Esophagus muscularis mucosa (tissue), 4 donors: ENCODE measurements at regions of chr9 and their contacts with region 1.

Region 1: GRCh38 chr9:94213511-94214124 is 45.5 kb upstream of the ZNF169 start:
- DNase-seq: peak; percentile 95
- H3K4me3 ChIP-seq: no peak overlapping the region
- H3K27ac ChIP-seq: no peak overlapping the region
- H3K4me1 ChIP-seq: peaks cover 0 to 7% (median 6%) of the 10 kb centered on the region in 4 donors
- H3K27me3 ChIP-seq: no peaks in the 10 kb centered on the region
- CTCF ChIP-seq: peak; percentile 82 to 87 (median 85)
- EP300 ChIP-seq: no peak
- POLR2A ChIP-seq: no peak

Region 2: DNA sequence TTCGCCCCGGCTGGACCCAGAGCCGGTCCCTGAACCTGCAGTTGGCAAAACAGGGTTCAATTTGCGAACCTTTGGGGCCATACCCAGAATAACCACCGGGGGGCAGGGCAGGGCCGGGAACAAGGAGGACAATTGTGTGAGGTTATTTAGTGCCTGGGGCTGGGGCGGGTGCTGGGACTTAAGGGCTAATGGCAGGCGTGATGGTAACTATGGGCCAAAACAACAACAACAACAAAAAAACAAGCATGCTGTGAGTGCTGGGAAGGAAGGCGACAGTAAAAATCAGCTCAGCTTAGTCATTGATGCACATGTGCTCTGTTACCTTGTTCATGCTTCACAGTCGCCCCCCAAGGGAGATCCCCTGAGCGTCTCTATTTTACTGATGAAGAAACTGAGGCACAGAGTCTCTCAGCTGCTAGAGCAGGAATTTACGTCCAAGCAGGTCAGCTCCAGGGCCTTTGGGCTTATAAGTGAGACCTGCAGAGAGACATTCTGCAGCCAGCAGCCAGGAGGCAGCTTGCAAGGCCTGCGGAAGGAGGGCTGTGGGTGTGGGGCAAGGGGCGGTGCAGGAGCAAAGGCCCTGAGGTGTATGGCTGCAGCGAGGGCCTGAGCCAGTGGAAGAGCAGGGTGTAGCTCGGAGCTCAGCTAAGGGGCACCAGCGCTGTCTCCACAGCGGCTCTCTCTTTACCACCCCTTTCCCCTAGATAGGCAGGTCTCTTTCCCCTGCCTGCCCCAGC is 531.2 kb before region 1 on chr9:
- intact Hi-C with region 1: loop called (anchors 5 kb)
- DNase-seq: peak; percentile 94
- H3K4me3 ChIP-seq: no peak overlapping the region
- H3K27ac ChIP-seq: no peak overlapping the region
- H3K4me1 ChIP-seq: peaks cover 0 to 8% (median 5%) of the 10 kb centered on the region in 4 donors
- H3K27me3 ChIP-seq: peaks cover 0 to 19% (median 0%) of the 10 kb centered on the region in 4 donors
- CTCF ChIP-seq: peak; percentile 70 to 88 (median 83)
- EP300 ChIP-seq: no peak
- POLR2A ChIP-seq: no peak

Region 3: GRCh38 chr9:94018628-94019027 is 195.0 kb before region 1 on chr9:
- intact Hi-C with region 1: loop called (anchors 5 kb)
- DNase-seq: peak; percentile 60
- H3K4me3 ChIP-seq: no peak overlapping the region
- H3K27ac ChIP-seq: peak overlapping the region; percentile 62 to 75 (median 71)
- H3K4me1 ChIP-seq: peaks cover 0 to 26% (median 24%) of the 10 kb centered on the region in 4 donors
- H3K27me3 ChIP-seq: no peaks in the 10 kb centered on the region
- CTCF ChIP-seq: no peak
- EP300 ChIP-seq: no peak
- POLR2A ChIP-seq: no peak

Region 4: GRCh38 chr9:94065535-94065961 is 148.1 kb before region 1 on chr9:
- intact Hi-C with region 1: loop called (anchors 1 kb)
- DNase-seq: no peak
- H3K4me3 ChIP-seq: no peak overlapping the region
- H3K27ac ChIP-seq: peak overlapping the region; percentile 32 to 41 (median 36)
- H3K4me1 ChIP-seq: peaks cover 3 to 14% (median 12%) of the 10 kb centered on the region in 4 donors
- H3K27me3 ChIP-seq: no peaks in the 10 kb centered on the region
- CTCF ChIP-seq: peak; percentile 84 to 93 (median 85)
- EP300 ChIP-seq: no peak
- POLR2A ChIP-seq: no peak